ENCODE measurements at regions of chr18 and their contacts with region 1.

Region 1: GRCh38 chr18:66724664-66725356 is 120.9 kb upstream of the CDH19 start:
- DNase-seq: no peak
- ATAC-seq: peak; percentile 89

Region 2: GRCh38 chr18:66533693-66534092 is 191.1 kb before region 1 on chr18:
- intact Hi-C with region 1: no loop called
- DNase-seq: no peak
- ATAC-seq: no peak

Region 3: DNA sequence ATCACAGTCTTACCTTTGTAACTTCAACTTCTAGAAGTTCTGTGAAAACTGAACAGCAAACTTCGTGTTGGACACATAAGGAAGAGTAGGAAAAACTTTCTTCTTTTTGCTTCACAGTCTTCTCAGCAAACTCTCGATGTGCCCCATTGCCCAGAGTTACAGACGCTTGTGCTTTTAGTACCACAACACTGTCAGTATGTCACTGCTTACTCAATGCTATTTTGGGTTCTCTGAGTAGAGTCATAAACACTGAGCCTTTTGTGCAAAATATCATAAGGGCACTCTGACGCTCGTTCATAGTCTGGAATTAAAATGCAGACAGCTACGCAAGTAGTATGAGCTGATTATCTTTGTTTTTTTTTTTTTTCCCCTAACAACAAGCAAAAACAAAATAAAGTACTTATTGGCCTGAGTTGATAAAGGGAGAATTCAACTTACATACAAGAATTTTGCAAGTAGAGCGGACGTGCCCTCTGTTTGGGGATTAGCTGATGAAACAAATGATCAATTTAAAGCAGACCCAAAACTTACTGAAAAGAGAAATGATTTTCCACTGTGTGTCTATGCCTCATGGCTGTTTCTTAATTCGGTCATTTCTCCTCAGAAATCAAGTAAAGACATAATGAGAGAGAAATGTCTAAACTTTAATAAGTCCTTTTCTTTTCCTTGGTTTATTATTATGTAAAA is 120.7 kb before region 1 on chr18 and contains the start of gene CDH19:
- intact Hi-C with region 1: loop called (anchors 10 kb)
- DNase-seq: no peak
- ATAC-seq: peak; percentile 94
- total RNA-seq, gene CDH19: 25.1 TPM

Region 4: GRCh38 chr18:66682855-66683322 is 41.9 kb before region 1 on chr18:
- intact Hi-C with region 1: loop called (anchors 5 kb)
- DNase-seq: no peak
- ATAC-seq: peak; percentile 93

Measured in Right ventricle myocardium inferior (tissue), 1 donor.